Panc1 (cell line): ENCODE measurements at regions of chr3 and their contacts with region 1.

Region 1: GRCh38 chr3:27712136-27713077 is 9.7 kb downstream of the EOMES start:
- DNase-seq: no peak
- ATAC-seq: peak; percentile 93
- H3K4me3 ChIP-seq: peak overlapping the region; percentile 13 to 25; a peak in 2 of 4 replicates
- H3K27ac ChIP-seq: no peak overlapping the region
- H3K4me1 ChIP-seq: peaks cover 5% of the 10 kb centered on the region
- H3K27me3 ChIP-seq: no peaks in the 10 kb centered on the region
- CTCF ChIP-seq: peak; percentile 90

Region 2: DNA sequence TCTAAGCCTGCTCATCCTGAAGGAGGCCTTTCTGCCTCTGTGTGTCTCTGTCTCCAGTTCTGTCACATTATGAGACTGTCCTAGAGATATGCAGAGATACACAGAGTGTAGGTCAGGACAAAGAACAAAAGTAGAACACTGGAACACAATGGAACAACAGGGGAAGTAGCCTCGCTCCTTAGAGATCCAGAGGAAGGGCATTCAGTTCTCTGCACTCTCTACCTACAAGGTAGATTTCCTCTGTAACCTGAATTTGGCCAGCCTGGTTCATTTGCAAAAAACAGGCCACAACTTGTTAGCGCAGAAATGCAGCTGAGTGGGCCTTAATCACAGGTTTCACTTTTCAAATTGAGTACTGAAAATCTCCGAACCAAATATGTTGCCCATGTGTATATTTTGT is 362.6 kb before region 1 on chr3:
- CTCF ChIA-PET with region 1: no interaction called
- POLR2A ChIA-PET with region 1: no interaction called
- in situ Hi-C with region 1: no loop called
- intact Hi-C with region 1: no loop called
- DNase-seq: no peak
- ATAC-seq: no peak
- H3K4me3 ChIP-seq: no peak overlapping the region
- H3K27ac ChIP-seq: no peak overlapping the region
- H3K4me1 ChIP-seq: no peaks in the 10 kb centered on the region; the same call in 1 of the 2 replicates
- H3K27me3 ChIP-seq: no peaks in the 10 kb centered on the region
- CTCF ChIP-seq: no peak

Region 3: GRCh38 chr3:27649277-27649676 is 63.1 kb before region 1 on chr3:
- CTCF ChIA-PET with region 1: interaction called, 15 read pairs
- POLR2A ChIA-PET with region 1: no interaction called
- in situ Hi-C with region 1: no loop called
- intact Hi-C with region 1: no loop called
- DNase-seq: no peak
- ATAC-seq: no peak
- H3K4me3 ChIP-seq: no peak overlapping the region
- H3K27ac ChIP-seq: no peak overlapping the region
- H3K4me1 ChIP-seq: no peaks in the 10 kb centered on the region
- H3K27me3 ChIP-seq: no peaks in the 10 kb centered on the region
- CTCF ChIP-seq: no peak

Region 4: GRCh38 chr3:28328188-28329151 is 616.1 kb after region 1 on chr3:
- CTCF ChIA-PET with region 1: interaction called, 6 read pairs
- POLR2A ChIA-PET with region 1: no interaction called
- in situ Hi-C with region 1: no loop called
- intact Hi-C with region 1: loop called (anchors 1 kb)
- DNase-seq: no peak
- ATAC-seq: no peak
- H3K4me3 ChIP-seq: no peak overlapping the region
- H3K27ac ChIP-seq: no peak overlapping the region
- H3K4me1 ChIP-seq: no peaks in the 10 kb centered on the region
- H3K27me3 ChIP-seq: no peaks in the 10 kb centered on the region
- CTCF ChIP-seq: peak; percentile 46; the same call in 1 of the 2 replicates